CD8-positive, alpha-beta T cell (primary cell): ENCODE measurements at regions of chr19 and their contacts with region 1.

Region 1: GRCh38 chr19:33186431-33187182 is 7.5 kb upstream of the LRP3 start:
- DNase-seq: peak in 1 of 9 experiments; percentile 29
- ATAC-seq: no peak
- H3K4me3 ChIP-seq: no peak overlapping the region
- H3K4me3 Mint-ChIP-seq: no peak overlapping the region
- H3K27ac ChIP-seq: no peak overlapping the region
- H3K27ac Mint-ChIP-seq: no peak overlapping the region
- H3K4me1 ChIP-seq: peaks cover 10% of the 10 kb centered on the region
- H3K4me1 Mint-ChIP-seq: peaks cover 9% of the 10 kb centered on the region
- H3K27me3 ChIP-seq: no peaks in the 10 kb centered on the region
- H3K27me3 Mint-ChIP-seq: peaks cover 8% of the 10 kb centered on the region
- CTCF ChIP-seq: no peak

Region 2: GRCh38 chr19:33125929-33126388 is 60.6 kb before region 1 on chr19:
- CTCF ChIA-PET with region 1: interaction called, 42 read pairs
- POLR2A ChIA-PET with region 1: no interaction called
- intact Hi-C with region 1: loop called (anchors 1 to 5 kb)
- DNase-seq: peak; percentile 9 to 79 (median 57)
- ATAC-seq: peak; percentile 97
- H3K4me3 ChIP-seq: no peak overlapping the region
- H3K4me3 Mint-ChIP-seq: no peak overlapping the region
- H3K27ac ChIP-seq: no peak overlapping the region
- H3K27ac Mint-ChIP-seq: no peak overlapping the region
- H3K4me1 ChIP-seq: no peaks in the 10 kb centered on the region
- H3K4me1 Mint-ChIP-seq: peaks cover 6% of the 10 kb centered on the region
- H3K27me3 ChIP-seq: no peaks in the 10 kb centered on the region
- H3K27me3 Mint-ChIP-seq: no peaks in the 10 kb centered on the region
- CTCF ChIP-seq: peak; percentile 71